Activated CD4-positive, alpha-beta T cell treated with anti-CD3 and anti-CD28 coated beads, Interleukin-2, amount 10 ng/mL, durations not matched to agents 24 days and 14 days (primary cell): ENCODE measurements at regions of chr11 and their contacts with region 1.

Region 1: DNA sequence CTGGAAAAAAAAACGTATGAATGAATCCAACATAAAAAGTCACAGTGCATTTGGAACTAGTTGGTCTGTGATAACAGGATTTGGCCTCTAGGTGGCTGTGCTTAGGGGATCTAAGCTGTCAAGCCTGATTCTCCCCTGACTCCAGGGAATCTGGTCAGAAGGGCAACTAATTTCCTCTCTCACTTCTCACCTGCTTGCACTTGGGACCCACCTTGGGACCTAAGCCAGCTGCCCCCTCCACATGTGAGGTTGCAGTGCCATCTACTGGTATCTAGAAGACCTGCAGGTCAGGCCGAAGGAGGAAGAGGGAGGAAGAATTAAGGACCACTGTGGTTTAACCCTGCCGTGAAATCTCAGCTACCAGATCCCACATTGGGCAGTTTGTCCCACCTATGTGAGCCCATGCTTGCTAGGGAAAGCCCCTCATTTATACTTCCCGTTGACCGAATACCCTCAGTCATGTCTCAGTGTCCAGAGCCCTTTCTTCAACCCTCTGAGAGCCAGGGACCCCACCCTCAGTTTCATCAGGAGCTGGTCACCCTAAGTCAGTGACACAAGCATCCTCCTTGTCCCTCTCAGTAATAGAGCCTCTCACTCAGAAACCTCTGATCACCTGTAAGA is 33.2 kb upstream of the CAVIN3 start:
- DNase-seq: peak; percentile 88
- H3K4me3 Mint-ChIP-seq: no peak overlapping the region
- H3K27ac Mint-ChIP-seq: peak overlapping the region; percentile 16
- H3K4me1 Mint-ChIP-seq: peaks cover 36% of the 10 kb centered on the region
- H3K27me3 Mint-ChIP-seq: no peaks in the 10 kb centered on the region

Region 2: GRCh38 chr11:5658318-5658717 is 695.2 kb before region 1 on chr11:
- intact Hi-C with region 1: no loop called
- DNase-seq: no peak
- H3K4me3 Mint-ChIP-seq: no peak overlapping the region
- H3K27ac Mint-ChIP-seq: no peak overlapping the region
- H3K4me1 Mint-ChIP-seq: no peaks in the 10 kb centered on the region
- H3K27me3 Mint-ChIP-seq: no peaks in the 10 kb centered on the region

Region 3: GRCh38 chr11:5992604-5993251 is 360.7 kb before region 1 on chr11:
- intact Hi-C with region 1: loop called (anchors 10 kb)
- DNase-seq: no peak
- H3K4me3 Mint-ChIP-seq: no peak overlapping the region
- H3K27ac Mint-ChIP-seq: no peak overlapping the region
- H3K4me1 Mint-ChIP-seq: no peaks in the 10 kb centered on the region
- H3K27me3 Mint-ChIP-seq: peaks cover 9% of the 10 kb centered on the region

Region 4: GRCh38 chr11:6203327-6203726 is 150.2 kb before region 1 on chr11:
- intact Hi-C with region 1: no loop called
- DNase-seq: peak; percentile 75
- H3K4me3 Mint-ChIP-seq: peak overlapping the region; percentile 18
- H3K27ac Mint-ChIP-seq: peak overlapping the region; percentile 41
- H3K4me1 Mint-ChIP-seq: peaks cover 27% of the 10 kb centered on the region
- H3K27me3 Mint-ChIP-seq: no peaks in the 10 kb centered on the region

Region 5: GRCh38 chr11:6251120-6251733 is 102.2 kb before region 1 on chr11:
- intact Hi-C with region 1: loop called (anchors 1 kb)
- DNase-seq: peak; percentile 86
- H3K4me3 Mint-ChIP-seq: no peak overlapping the region
- H3K27ac Mint-ChIP-seq: no peak overlapping the region
- H3K4me1 Mint-ChIP-seq: no peaks in the 10 kb centered on the region
- H3K27me3 Mint-ChIP-seq: peaks cover 11% of the 10 kb centered on the region

Region 6: GRCh38 chr11:6315811-6316425 is 37.6 kb before region 1 on chr11:
- intact Hi-C with region 1: loop called (anchors 1 kb)
- DNase-seq: peak; percentile 80
- H3K4me3 Mint-ChIP-seq: no peak overlapping the region
- H3K27ac Mint-ChIP-seq: no peak overlapping the region
- H3K4me1 Mint-ChIP-seq: peaks cover 25% of the 10 kb centered on the region
- H3K27me3 Mint-ChIP-seq: peaks cover 47% of the 10 kb centered on the region